AG04449 (cell line): ENCODE measurements at regions of chr19 and their contacts with region 1.

Region 1: GRCh38 chr19:5031231-5032100 is 62.6 kb downstream of the KDM4B start:
- DNase-seq: no peak
- H3K4me3 ChIP-seq: no peak overlapping the region
- CTCF ChIP-seq: peak; percentile 98

Region 2: DNA sequence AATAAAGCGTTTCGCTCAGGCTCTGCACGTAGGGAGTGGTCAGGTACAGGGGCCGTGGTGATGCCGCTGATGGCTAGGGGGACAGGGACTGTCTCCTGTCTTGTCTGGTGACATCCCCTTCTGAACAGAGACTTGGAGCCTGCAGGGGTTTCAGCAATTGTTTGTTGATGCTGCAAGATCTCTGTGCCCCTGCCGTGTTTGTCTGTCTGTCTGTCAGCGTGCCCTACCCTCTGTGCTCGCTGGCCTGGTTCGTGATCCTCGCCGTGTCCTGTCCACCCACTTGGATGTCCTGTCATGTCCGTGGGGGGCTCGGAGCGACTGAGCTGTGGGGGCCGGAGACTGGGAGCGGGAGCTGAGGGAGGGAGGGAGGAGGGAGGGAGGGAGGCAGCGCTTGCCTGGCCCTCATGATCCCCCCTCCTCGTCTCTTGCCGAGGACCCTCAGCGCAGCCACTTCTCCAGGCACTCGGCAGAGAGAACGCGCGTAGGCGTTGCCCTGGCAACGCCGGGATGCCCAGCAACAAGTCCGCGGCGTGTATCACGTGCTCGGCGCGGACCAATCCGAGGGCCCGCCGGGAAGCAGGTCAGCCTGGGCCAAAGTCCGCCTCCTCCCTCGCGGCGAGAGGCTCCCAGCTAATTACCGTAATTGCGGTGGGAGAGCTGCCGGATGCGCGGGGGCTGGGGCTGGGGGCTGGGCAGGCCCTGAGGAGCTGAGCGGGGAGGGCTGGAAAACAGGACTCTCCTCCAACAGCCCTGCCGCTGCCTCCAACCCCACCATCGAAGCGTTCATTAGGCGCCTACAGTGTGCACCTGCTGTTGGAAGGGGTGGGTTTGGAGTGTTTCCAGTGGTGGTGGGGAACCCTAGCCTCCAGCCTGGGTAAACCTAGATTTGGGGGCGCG is 271.8 kb before region 1 on chr19:
- CTCF ChIA-PET with region 1: no interaction called
- POLR2A ChIA-PET with region 1: no interaction called
- DNase-seq: peak; percentile 21
- H3K4me3 ChIP-seq: peak overlapping the region; percentile 37
- CTCF ChIP-seq: no peak

Region 3: GRCh38 chr19:4867534-4868285 is 163.8 kb before region 1 on chr19 and contains the start of gene PLIN3:
- CTCF ChIA-PET with region 1: interaction called, 88 read pairs
- POLR2A ChIA-PET with region 1: no interaction called
- DNase-seq: peak; percentile 59
- H3K4me3 ChIP-seq: peak within 1 kb of the TSS; percentile 88
- CTCF ChIP-seq: no peak

Region 4: GRCh38 chr19:4968462-4969291 is 62.8 kb before region 1 on chr19 and contains the start of gene KDM4B:
- CTCF ChIA-PET with region 1: interaction called, 59 read pairs
- POLR2A ChIA-PET with region 1: interaction called, 14 read pairs
- DNase-seq: peak; percentile 96
- H3K4me3 ChIP-seq: peak within 1 kb of the TSS; percentile 77
- CTCF ChIP-seq: no peak

Region 5: GRCh38 chr19:5001615-5002014 is 29.9 kb before region 1 on chr19:
- CTCF ChIA-PET with region 1: interaction called, 91 read pairs
- POLR2A ChIA-PET with region 1: no interaction called
- DNase-seq: no peak
- H3K4me3 ChIP-seq: no peak overlapping the region
- CTCF ChIP-seq: peak; percentile 77

Region 6: DNA sequence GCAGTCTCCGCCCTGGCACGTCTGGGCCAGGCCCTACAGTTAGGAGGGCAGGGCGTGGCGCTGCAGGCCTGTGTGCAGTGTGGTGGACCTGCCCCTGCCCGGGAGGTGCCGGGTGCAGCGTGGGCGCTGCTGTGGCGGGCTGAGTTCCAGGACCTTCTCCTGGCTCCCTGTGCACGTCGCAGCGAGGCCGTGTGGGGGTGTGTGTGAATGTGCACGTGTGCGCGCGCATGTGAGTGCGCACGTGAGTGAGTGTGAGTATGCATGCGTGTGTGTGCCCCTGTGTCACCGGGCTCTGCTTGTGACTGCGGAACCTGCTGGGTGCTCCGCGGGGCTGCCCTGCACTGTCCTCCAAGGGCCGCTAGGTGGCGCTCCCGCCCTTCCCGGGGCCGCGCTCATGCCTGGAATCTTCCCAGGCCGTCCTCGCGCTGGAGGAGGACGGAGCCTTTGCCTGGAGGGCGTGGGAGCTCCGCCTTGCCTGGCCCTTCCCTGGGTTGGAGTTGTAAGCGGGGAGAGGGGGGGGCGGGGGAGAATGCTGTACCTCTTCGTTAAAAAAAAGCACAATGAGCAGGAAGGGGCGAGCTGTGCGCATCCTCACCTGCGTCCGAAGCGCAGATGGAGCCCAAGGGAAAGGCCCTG is 16.7 kb after region 1 on chr19:
- CTCF ChIA-PET with region 1: interaction called, 151 read pairs
- POLR2A ChIA-PET with region 1: no interaction called
- DNase-seq: no peak
- H3K4me3 ChIP-seq: no peak overlapping the region
- CTCF ChIP-seq: peak; percentile 100